ENCODE measurements at regions of chr5 and their contacts with region 1.

Region 1: DNA sequence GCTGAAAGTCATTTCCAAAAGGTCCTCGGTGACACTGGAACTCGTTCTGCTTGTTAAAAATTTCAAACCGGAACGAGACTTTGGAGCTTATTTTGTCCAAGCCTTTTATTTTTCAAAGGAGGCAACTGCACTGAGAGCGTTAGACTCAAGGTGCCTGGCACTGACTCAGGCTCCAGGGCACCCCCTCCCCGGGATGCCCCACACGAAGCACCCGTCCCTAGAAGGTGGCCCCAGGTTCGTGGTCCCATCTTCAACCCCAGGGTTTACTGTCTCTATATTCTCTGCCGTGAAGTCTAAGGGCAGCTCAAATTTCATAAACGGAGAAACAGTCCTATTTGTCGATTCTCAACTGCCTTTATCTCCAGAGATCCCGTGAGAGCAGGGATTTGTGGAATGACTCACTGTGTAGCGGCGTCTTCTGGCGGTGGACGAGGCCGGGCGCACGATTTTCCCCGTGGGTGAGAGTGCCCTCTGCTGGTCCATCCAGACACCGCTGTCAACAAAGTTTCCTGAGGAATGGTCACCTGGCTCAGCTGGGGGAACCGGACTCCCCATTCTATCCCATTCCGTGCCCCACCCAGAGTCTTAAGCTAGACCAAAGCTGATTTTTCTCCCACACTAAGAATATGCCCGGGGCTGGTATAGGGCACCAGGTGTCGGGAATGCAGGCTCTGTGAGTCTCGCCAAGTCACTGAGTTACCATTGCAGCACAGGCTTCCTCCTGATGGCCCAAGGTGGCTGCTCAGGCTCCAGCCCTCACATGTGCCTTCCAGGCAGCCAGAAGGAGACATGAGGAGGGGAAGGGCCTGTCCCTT is 27.1 kb upstream of the SLC6A19 start:
- DNase-seq: peak; percentile 59
- ATAC-seq: peak; percentile 51
- H3K4me3 ChIP-seq: no peak overlapping the region
- H3K4me3 Mint-ChIP-seq: no peak overlapping the region
- H3K27ac ChIP-seq: no peak overlapping the region
- H3K27ac Mint-ChIP-seq: no peak overlapping the region
- H3K4me1 ChIP-seq: no peaks in the 10 kb centered on the region
- H3K4me1 Mint-ChIP-seq: peaks cover 2% of the 10 kb centered on the region
- H3K27me3 ChIP-seq: peaks cover 0 to 10% (median 1%) of the 10 kb centered on the region in 4 experiments
- H3K27me3 Mint-ChIP-seq: no peaks in the 10 kb centered on the region
- CTCF ChIP-seq: peak; percentile 69

Region 2: DNA sequence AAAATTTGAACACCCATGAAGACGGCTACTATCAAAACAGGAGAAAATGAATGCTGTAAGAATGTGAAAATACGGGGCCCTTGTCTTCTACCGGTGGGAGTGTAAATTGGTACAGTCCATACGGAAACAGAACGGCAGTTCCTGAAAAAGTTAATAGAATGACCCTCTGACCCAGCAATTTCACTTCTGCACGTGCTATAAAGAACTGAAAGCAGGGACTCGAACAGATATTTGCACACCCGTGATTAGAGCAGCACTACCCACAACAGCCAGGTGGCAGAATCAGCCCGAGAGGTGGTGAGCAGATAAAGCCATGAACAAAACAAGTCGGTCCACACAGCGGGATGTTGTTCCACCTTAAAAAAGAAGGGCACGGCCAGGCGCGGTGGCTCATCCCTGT is 39.9 kb before region 1 on chr5:
- CTCF ChIA-PET with region 1: interaction called, 62 read pairs
- POLR2A ChIA-PET with region 1: no interaction called
- intact Hi-C with region 1: loop called (anchors 2 kb)
- DNase-seq: peak; percentile 83
- ATAC-seq: peak; percentile 80
- H3K4me3 ChIP-seq: no peak overlapping the region
- H3K4me3 Mint-ChIP-seq: peak overlapping the region; percentile 58
- H3K27ac ChIP-seq: no peak overlapping the region
- H3K27ac Mint-ChIP-seq: peak overlapping the region; percentile 38
- H3K4me1 ChIP-seq: peaks cover 34 to 50% of the 10 kb centered on the region in 2 donors
- H3K4me1 Mint-ChIP-seq: peaks cover 43% of the 10 kb centered on the region
- H3K27me3 ChIP-seq: peaks cover 0 to 7% (median 3%) of the 10 kb centered on the region in 4 experiments
- H3K27me3 Mint-ChIP-seq: peaks cover 15% of the 10 kb centered on the region
- CTCF ChIP-seq: peak; percentile 53

Region 3: DNA sequence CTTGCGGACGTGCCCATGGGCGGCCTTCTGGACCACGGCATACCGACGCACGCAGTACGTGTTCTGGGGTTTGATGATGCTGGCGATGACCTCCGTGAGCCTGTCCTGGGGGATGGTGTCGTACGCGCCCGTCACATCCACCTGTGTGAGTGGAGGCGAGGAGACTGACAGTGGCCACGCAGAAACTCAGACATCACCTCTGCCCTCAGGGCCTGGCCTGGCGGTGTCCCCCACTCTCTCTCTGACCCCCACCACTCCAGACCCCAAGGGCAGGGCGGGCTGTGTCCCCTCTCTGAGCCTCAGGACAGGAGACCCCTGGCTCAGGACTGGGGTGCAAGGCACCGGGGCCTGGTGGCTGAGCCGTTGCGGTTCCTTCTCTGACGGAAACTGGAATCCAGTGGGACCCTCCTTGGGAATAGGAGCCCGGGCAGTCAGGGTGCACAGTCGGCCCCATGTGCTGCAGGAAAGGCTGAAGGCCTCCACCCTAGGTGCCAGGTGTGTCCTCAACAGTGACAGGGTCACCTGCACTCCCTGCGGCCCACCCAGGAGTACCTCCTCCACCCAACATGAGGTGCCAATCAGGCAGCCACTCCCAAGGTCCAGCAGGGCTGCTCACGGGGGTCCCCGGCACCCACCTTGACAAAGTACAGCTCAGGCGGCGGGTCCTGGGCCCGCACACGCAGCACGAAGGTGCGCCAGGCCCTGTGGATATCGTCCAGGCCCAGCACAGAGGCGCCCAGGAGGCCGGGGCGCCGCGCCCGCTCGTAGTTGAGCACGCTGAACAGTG is 104.5 kb after region 1 on chr5:
- CTCF ChIA-PET with region 1: no interaction called
- POLR2A ChIA-PET with region 1: no interaction called
- intact Hi-C with region 1: no loop called
- DNase-seq: no peak
- ATAC-seq: no peak
- H3K4me3 ChIP-seq: no peak overlapping the region
- H3K4me3 Mint-ChIP-seq: no peak overlapping the region
- H3K27ac ChIP-seq: no peak overlapping the region
- H3K27ac Mint-ChIP-seq: no peak overlapping the region
- H3K4me1 ChIP-seq: no peaks in the 10 kb centered on the region
- H3K4me1 Mint-ChIP-seq: no peaks in the 10 kb centered on the region
- H3K27me3 ChIP-seq: no peaks in the 10 kb centered on the region
- H3K27me3 Mint-ChIP-seq: no peaks in the 10 kb centered on the region
- CTCF ChIP-seq: no peak